ENCODE measurements at regions of chr18 and their contacts with region 1.

Region 1: GRCh38 chr18:5879479-5879882 is 15.8 kb downstream of the TMEM200C start:
- DNase-seq: no peak
- ATAC-seq: no peak
- H3K4me3 Mint-ChIP-seq: no peak overlapping the region
- H3K27ac Mint-ChIP-seq: no peak overlapping the region
- H3K4me1 Mint-ChIP-seq: no peaks in the 10 kb centered on the region
- H3K27me3 Mint-ChIP-seq: peaks cover 3% of the 10 kb centered on the region

Region 2: GRCh38 chr18:5868218-5869115 is 11.0 kb before region 1 on chr18:
- CTCF ChIA-PET with region 1: no interaction called
- POLR2A ChIA-PET with region 1: no interaction called
- DNase-seq: peak; percentile 61
- ATAC-seq: no peak
- H3K4me3 Mint-ChIP-seq: no peak overlapping the region
- H3K27ac Mint-ChIP-seq: no peak overlapping the region
- H3K4me1 Mint-ChIP-seq: no peaks in the 10 kb centered on the region
- H3K27me3 Mint-ChIP-seq: no peaks in the 10 kb centered on the region

Region 3: GRCh38 chr18:5890331-5891183 is 11.1 kb after region 1 on chr18:
- CTCF ChIA-PET with region 1: interaction called, 15 read pairs
- POLR2A ChIA-PET with region 1: no interaction called
- DNase-seq: peak; percentile 38
- ATAC-seq: peak; percentile 94
- H3K4me3 Mint-ChIP-seq: no peak overlapping the region
- H3K27ac Mint-ChIP-seq: no peak overlapping the region
- H3K4me1 Mint-ChIP-seq: peaks cover 2% of the 10 kb centered on the region
- H3K27me3 Mint-ChIP-seq: peaks cover 52% of the 10 kb centered on the region

Region 4: DNA sequence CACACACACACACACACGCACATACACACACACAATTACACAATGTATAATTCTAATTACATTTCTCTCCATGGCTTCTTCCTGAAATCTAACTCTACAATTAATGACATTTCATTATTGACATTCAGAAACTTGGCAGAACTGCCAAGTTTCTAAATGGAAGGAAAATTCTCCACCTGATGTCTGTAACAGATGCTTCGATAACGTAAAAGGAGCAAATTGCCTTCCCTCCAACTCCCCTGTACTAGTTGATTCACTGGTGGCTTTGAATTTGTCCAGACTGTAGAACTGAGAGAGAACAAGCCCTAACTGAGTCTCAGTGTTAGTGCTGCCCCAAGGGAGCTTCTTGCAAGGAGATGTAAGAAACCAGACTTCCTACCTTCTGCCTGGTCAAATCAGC is 270.9 kb after region 1 on chr18:
- CTCF ChIA-PET with region 1: no interaction called
- POLR2A ChIA-PET with region 1: no interaction called
- DNase-seq: no peak
- ATAC-seq: no peak
- H3K4me3 Mint-ChIP-seq: no peak overlapping the region
- H3K27ac Mint-ChIP-seq: no peak overlapping the region
- H3K4me1 Mint-ChIP-seq: no peaks in the 10 kb centered on the region
- H3K27me3 Mint-ChIP-seq: no peaks in the 10 kb centered on the region

Measured in activated CD8-positive, alpha-beta T cell treated with anti-CD3 and anti-CD28 coated beads, Interleukin-2, amount 10 ng/mL, durations not matched to agents 7 days and 5 days (primary cell).